Activated naive CD4-positive, alpha-beta T cell treated with anti-CD3 and anti-CD28 coated beads for 36 hours (primary cell): ENCODE measurements at regions of chr1 and their contacts with region 1.

Region 1: GRCh38 chr1:181014477-181015250 is 8.0 kb downstream of the STX6 start:
- DNase-seq: peak; percentile 33
- H3K4me3 Mint-ChIP-seq: no peak overlapping the region
- H3K27ac Mint-ChIP-seq: no peak overlapping the region
- H3K4me1 Mint-ChIP-seq: peaks cover 43% of the 10 kb centered on the region
- H3K27me3 Mint-ChIP-seq: no peaks in the 10 kb centered on the region

Region 2: GRCh38 chr1:180462102-180462501 is 552.6 kb before region 1 on chr1:
- CTCF ChIA-PET with region 1: no interaction called
- intact Hi-C with region 1: no loop called
- DNase-seq: peak; percentile 8
- H3K4me3 Mint-ChIP-seq: no peak overlapping the region
- H3K27ac Mint-ChIP-seq: no peak overlapping the region
- H3K4me1 Mint-ChIP-seq: peaks cover 7% of the 10 kb centered on the region
- H3K27me3 Mint-ChIP-seq: no peaks in the 10 kb centered on the region

Region 3: GRCh38 chr1:180571832-180572636 is 442.6 kb before region 1 on chr1:
- CTCF ChIA-PET with region 1: no interaction called
- intact Hi-C with region 1: loop called (anchors 1 kb)
- DNase-seq: peak; percentile 67
- H3K4me3 Mint-ChIP-seq: no peak overlapping the region
- H3K27ac Mint-ChIP-seq: peak overlapping the region; percentile 72
- H3K4me1 Mint-ChIP-seq: peaks cover 25% of the 10 kb centered on the region
- H3K27me3 Mint-ChIP-seq: peaks cover 10% of the 10 kb centered on the region

Region 4: GRCh38 chr1:180981596-180982387 is 32.9 kb before region 1 on chr1:
- CTCF ChIA-PET with region 1: no interaction called
- intact Hi-C with region 1: loop called (anchors 2 kb)
- DNase-seq: peak; percentile 68
- H3K4me3 Mint-ChIP-seq: no peak overlapping the region
- H3K27ac Mint-ChIP-seq: peak overlapping the region; percentile 46
- H3K4me1 Mint-ChIP-seq: peaks cover 30% of the 10 kb centered on the region
- H3K27me3 Mint-ChIP-seq: no peaks in the 10 kb centered on the region

Region 5: GRCh38 chr1:181099152-181100014 is 84.7 kb after region 1 on chr1:
- CTCF ChIA-PET with region 1: interaction called, 4 read pairs
- intact Hi-C with region 1: loop called (anchors 1 kb)
- DNase-seq: peak; percentile 80
- H3K4me3 Mint-ChIP-seq: peak overlapping the region; percentile 67
- H3K27ac Mint-ChIP-seq: peak overlapping the region; percentile 99
- H3K4me1 Mint-ChIP-seq: peaks cover 88% of the 10 kb centered on the region
- H3K27me3 Mint-ChIP-seq: no peaks in the 10 kb centered on the region

Region 6: DNA sequence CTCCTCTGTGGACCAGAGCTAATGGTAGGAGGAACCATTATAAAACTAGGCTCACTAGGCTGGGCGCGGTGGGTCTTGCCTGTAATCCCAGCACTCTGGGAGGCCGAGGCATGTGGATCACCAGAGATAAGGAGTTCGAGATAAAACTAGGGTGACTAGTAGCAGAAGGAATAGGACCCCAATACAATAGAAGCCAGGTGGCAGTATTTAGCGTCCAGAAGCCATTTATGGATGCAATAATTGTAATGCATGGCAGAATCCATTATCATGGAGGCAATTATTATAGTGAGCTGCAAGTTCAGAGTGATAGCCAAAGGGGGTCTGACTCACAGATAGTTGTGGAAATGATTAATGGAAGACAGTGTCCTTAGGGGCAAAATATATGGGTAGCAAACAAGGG is 217.9 kb after region 1 on chr1:
- CTCF ChIA-PET with region 1: no interaction called
- intact Hi-C with region 1: no loop called
- DNase-seq: no peak
- H3K4me3 Mint-ChIP-seq: no peak overlapping the region
- H3K27ac Mint-ChIP-seq: no peak overlapping the region
- H3K4me1 Mint-ChIP-seq: no peaks in the 10 kb centered on the region
- H3K27me3 Mint-ChIP-seq: no peaks in the 10 kb centered on the region

Region 7: DNA sequence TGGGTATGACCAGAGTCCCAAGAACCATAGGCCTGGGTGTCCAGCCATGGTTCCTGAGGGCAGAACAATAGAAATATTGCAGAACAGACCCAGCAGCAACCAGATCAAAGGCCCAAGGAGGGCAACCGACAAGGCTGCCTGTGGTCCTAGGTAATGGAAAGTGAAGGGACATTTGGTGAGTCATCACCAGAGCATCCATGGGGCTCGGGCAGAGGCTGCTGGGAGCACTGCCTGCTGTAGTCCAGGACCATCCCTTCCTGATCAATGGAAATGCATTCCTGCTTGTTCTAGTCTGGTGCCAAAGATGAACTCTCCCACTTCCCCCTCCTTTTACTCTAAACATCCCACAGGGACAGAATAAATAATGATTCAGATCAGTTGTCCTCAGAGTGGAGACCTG is 295.9 kb after region 1 on chr1:
- CTCF ChIA-PET with region 1: no interaction called
- intact Hi-C with region 1: no loop called
- DNase-seq: no peak
- H3K4me3 Mint-ChIP-seq: no peak overlapping the region
- H3K27ac Mint-ChIP-seq: no peak overlapping the region
- H3K4me1 Mint-ChIP-seq: peaks cover 10% of the 10 kb centered on the region
- H3K27me3 Mint-ChIP-seq: peaks cover 18% of the 10 kb centered on the region